ENCODE measurements at regions of chr17 and their contacts with region 1.

Region 1: DNA sequence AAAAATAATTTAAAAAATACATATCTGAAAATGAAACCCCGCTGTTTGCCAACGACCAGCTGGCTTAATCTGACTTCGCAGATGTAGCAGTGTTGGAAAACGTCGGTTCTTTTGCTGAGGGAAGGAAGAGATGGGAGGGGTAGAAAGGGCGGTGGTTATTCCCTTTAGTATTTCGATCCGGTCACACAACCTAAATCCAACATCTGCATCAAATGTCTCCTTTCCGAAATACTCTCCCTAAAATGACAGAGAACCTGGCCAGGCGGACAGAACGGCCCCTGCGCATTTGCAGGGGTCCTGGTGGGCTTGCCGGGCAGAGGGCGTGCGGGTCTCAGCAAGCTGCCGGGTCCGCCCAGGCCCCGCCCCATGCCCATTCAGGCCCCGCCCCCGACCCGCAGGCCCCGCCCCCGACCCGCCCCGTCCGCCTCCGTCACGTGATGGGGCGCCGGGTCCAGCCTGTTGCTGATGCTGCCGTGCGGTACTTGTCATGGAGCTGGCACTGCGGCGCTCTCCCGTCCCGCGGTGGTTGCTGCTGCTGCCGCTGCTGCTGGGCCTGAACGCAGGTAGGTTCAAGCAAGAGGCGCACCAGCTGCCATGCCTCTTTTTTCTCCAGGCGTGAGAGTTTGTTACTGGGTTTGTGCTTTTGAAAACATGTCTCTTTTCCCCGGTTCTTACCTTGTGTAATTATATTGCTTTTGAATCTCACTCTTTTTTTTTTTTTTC is at the start of gene SCPEP1:
- DNase-seq: peak; percentile 81
- ATAC-seq: peak; percentile 94
- H3K4me3 ChIP-seq: peak within 1 kb of the TSS; percentile 85
- H3K27ac ChIP-seq: no peak within 1 kb of the TSS
- H3K4me1 ChIP-seq: peaks cover 21% of the 10 kb centered on the region
- H3K27me3 ChIP-seq: no peaks in the 10 kb centered on the region
- CTCF ChIP-seq: no peak
- total RNA-seq, gene SCPEP1: 56.0 and 73.3 TPM in 2 replicates

Region 2: DNA sequence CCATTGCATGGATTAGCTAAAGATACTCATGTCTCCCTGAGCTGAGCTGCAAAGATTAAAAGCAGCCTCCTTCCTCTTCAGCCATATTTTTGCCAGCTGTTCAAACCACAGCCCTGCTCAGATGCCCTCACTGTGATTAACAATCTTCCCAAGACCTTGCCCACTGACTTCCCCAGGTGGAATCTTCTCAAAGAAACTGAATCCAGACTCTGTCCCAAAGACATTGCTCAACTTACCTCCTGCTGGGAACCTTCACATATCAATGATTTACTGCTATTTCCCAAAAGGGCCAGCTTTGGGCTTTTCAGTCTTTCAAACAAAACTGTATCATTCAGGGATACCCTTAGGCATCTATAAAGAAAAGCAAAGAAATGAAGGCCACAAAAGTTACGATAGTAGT is 153.3 kb before region 1 on chr17:
- CTCF ChIA-PET with region 1: no interaction called
- POLR2A ChIA-PET with region 1: no interaction called
- intact Hi-C with region 1: no loop called
- DNase-seq: no peak
- ATAC-seq: no peak
- H3K4me3 ChIP-seq: no peak overlapping the region
- H3K27ac ChIP-seq: no peak overlapping the region
- H3K4me1 ChIP-seq: no peaks in the 10 kb centered on the region
- H3K27me3 ChIP-seq: no peaks in the 10 kb centered on the region
- CTCF ChIP-seq: no peak

Region 3: GRCh38 chr17:56994009-56994792 is 16.4 kb after region 1 on chr17:
- CTCF ChIA-PET with region 1: interaction called, 11 read pairs
- POLR2A ChIA-PET with region 1: no interaction called
- intact Hi-C with region 1: no loop called
- DNase-seq: peak; percentile 94
- ATAC-seq: peak; percentile 90
- H3K4me3 ChIP-seq: no peak overlapping the region
- H3K27ac ChIP-seq: no peak overlapping the region
- H3K4me1 ChIP-seq: peaks cover 20% of the 10 kb centered on the region
- H3K27me3 ChIP-seq: no peaks in the 10 kb centered on the region
- CTCF ChIP-seq: no peak

Region 4: GRCh38 chr17:57480438-57481196 is 502.8 kb after region 1 on chr17:
- CTCF ChIA-PET with region 1: no interaction called
- POLR2A ChIA-PET with region 1: no interaction called
- intact Hi-C with region 1: no loop called
- DNase-seq: peak; percentile 84
- ATAC-seq: peak; percentile 97
- H3K4me3 ChIP-seq: no peak overlapping the region
- H3K27ac ChIP-seq: peak overlapping the region; percentile 47
- H3K4me1 ChIP-seq: peaks cover 16% of the 10 kb centered on the region
- H3K27me3 ChIP-seq: no peaks in the 10 kb centered on the region
- CTCF ChIP-seq: no peak

Region 5: DNA sequence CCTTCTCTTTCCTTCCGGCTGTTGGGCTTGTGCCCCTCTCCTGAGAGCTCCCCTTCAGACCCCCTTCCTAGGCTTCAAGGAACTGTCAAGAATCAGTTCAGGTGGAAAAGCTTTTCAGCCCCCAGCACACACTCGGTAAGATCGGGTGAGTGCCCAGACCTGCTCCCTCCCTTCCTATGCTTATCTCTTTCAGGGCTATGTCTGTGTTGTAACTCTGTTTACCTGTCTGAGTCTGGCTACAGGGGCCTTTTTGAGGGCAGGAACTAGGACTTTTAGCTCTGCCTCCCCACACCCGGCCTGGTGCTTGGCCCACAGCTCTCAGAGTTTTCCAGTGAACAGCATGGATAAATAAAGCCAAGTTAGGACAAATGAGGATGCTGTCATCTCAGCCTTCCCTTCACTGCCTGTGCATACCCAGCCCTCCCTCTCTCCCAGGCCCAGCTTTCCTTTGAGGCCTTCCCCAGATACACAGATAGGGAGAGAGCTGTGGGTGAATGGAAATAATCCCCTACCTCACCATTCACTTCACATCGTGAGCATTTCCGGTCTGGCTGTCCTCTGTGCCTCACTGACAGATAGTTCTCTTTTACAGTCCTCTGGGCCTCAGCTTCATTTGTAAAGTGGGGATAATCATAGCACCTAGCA is 877.7 kb after region 1 on chr17:
- CTCF ChIA-PET with region 1: no interaction called
- POLR2A ChIA-PET with region 1: interaction called, 10 read pairs
- intact Hi-C with region 1: no loop called
- DNase-seq: no peak
- ATAC-seq: no peak
- H3K4me3 ChIP-seq: no peak overlapping the region
- H3K27ac ChIP-seq: no peak overlapping the region
- H3K4me1 ChIP-seq: peaks cover 16% of the 10 kb centered on the region
- H3K27me3 ChIP-seq: no peaks in the 10 kb centered on the region
- CTCF ChIP-seq: no peak

Measured in PC-3 (cell line).